ENCODE measurements at regions of chr1 and their contacts with region 1.

Region 1: DNA sequence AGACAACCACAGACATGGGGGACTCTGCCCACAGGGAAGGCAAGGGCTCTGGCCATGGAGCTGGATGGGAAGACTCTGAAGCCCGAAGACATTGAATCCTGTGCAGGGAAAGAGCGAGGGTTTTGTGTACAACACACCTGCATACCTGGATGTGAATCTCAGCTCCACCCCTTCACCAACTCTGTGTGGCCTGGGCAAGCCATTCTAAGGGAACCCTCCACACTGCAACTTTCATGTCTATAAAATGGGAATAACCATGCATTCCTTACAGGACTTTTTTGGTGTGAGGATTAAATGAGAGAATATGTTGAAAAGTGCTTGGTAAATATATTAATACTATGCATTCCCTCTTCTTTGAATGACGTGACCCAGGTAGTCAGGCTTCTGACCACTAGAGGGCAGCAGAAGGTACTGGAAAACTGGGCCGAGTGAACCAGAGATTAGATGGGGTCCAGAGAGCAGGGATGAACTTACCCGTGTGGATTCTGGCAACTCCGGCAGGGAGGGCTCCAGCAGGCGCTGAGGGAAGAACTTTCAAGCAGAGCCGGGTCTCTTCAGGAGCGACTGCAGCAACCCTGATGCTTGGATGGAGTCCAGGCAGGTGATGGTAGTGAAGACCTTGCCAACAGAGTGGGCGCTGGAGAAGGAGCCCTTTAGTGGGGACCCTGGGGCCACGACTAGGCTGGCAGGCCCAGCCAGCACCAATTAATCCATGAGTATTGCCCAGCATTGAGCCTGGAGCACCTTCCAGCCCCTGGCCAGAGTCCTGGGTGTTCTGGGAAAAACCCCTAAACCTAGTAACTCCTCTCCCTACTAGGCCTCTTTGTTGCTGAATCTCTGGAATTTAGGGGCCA is 834 bp upstream of the ELF3 start:
- DNase-seq: peak; percentile 77
- ATAC-seq: peak; percentile 48
- H3K4me3 ChIP-seq: peak overlapping the region; percentile 90 to 93
- H3K27ac ChIP-seq: peak overlapping the region; percentile 74
- H3K4me1 ChIP-seq: peaks cover 61 to 97% of the 10 kb centered on the region in 2 experiments
- H3K27me3 ChIP-seq: no peaks in the 10 kb centered on the region
- CTCF ChIP-seq: peak in 2 of 3 experiments; percentile 89 to 96; a peak in 4 of 6 replicates
- POLR2A ChIP-seq: no peak
- RAD21 ChIP-seq: no peak

Region 2: DNA sequence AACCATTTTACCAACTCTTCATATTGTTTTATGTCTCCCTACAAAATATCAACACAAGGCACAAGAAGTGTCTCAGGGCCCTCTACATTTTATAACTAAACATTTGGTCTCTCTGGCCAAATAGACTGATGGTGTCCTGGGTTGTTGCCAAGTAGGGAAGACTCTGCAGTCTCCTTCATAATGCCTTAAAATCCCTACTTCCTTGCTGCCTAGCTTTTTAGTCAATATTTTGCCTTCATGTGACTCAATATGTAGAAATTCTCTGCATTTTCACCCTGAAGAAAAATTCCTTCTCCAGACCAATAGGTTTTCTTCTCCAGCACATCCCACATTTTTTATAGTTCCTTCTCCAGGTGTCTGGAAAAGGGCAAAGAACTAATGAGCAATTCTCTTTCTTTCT is 253.1 kb before region 1 on chr1:
- CTCF ChIA-PET with region 1: no interaction called
- POLR2A ChIA-PET with region 1: no interaction called
- RAD21 ChIA-PET with region 1: no interaction called
- intact Hi-C with region 1: no loop called
- DNase-seq: no peak
- ATAC-seq: no peak
- H3K4me3 ChIP-seq: no peak overlapping the region
- H3K27ac ChIP-seq: no peak overlapping the region
- H3K4me1 ChIP-seq: peaks cover 0 to 12% of the 10 kb centered on the region in 2 experiments; a peak in 2 of 4 replicates
- H3K27me3 ChIP-seq: no peaks in the 10 kb centered on the region
- CTCF ChIP-seq: no peak
- POLR2A ChIP-seq: no peak
- RAD21 ChIP-seq: no peak

Region 3: GRCh38 chr1:202029171-202029665 is 19.7 kb after region 1 on chr1:
- CTCF ChIA-PET with region 1: interaction called, 8 read pairs
- POLR2A ChIA-PET with region 1: interaction called, 174 read pairs
- RAD21 ChIA-PET with region 1: interaction called, 3 to 8 read pairs
- intact Hi-C with region 1: no loop called
- DNase-seq: peak; percentile 73
- ATAC-seq: peak; percentile 77
- H3K4me3 ChIP-seq: peak overlapping the region in 1 of 2 experiments; percentile 8; a peak in 1 of 4 replicates
- H3K27ac ChIP-seq: peak overlapping the region; percentile 72
- H3K4me1 ChIP-seq: peaks cover 48 to 73% of the 10 kb centered on the region in 2 experiments
- H3K27me3 ChIP-seq: no peaks in the 10 kb centered on the region
- CTCF ChIP-seq: no peak
- POLR2A ChIP-seq: no peak
- RAD21 ChIP-seq: peak; percentile 32; the same call in 1 of the 2 replicates

Region 4: DNA sequence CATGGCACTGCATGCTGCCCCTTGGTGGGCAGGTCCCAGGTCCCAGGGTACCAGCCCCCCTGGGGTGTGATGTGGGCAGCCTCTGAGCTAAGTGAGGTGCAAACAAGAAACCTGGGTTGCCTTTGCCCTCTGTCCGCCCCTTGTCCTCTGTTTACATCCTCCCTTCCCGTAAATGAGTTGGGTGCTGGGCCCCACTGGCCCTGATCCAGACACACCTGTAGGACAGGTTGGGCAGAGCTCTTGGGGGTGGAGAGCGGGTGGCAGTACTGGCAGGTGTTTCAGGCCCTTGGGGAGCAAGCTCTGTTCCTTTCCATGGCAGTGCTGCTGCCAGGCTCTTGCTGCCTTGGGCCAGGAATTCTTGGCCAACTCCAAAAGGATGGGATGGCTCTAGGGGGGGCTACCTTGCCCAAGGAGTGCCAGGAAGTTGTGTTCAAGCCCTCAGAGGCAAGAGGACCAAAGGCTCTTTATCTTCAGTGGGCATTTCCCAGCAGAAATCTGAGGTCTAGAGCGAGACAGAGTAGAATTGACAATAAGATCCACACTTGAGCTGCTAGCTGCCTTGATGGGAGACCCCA is 36.8 kb after region 1 on chr1:
- CTCF ChIA-PET with region 1: interaction called, 4 read pairs
- POLR2A ChIA-PET with region 1: interaction called, 45 read pairs
- RAD21 ChIA-PET with region 1: no interaction called
- intact Hi-C with region 1: no loop called
- DNase-seq: no peak
- ATAC-seq: peak; percentile 39
- H3K4me3 ChIP-seq: peak overlapping the region in 1 of 2 experiments; percentile 15; a peak in 1 of 4 replicates
- H3K27ac ChIP-seq: peak overlapping the region; percentile 63
- H3K4me1 ChIP-seq: peaks cover 47 to 79% of the 10 kb centered on the region in 2 experiments
- H3K27me3 ChIP-seq: no peaks in the 10 kb centered on the region
- CTCF ChIP-seq: no peak
- POLR2A ChIP-seq: no peak
- RAD21 ChIP-seq: peak; percentile 11; the same call in 1 of the 2 replicates

Region 5: DNA sequence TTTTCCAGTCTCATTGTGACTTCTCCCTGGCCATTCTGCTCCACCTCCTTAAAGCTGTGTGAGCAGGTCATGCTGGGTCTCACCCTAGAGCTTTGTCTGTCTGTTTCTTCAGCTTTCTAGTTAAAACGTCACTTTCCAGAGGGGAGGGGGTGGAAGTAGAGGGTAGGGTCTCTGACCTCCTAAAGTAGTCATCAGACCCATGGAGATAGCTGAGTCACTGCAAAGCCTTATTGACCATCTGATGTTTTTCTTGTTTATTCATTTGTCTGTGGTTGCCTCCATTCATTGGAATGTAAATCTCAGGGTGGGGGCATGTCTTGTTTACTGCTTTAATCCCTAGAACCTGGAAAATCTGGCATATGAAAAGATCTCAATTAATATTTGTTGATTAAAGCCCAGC is 53.5 kb after region 1 on chr1:
- CTCF ChIA-PET with region 1: interaction called, 4 read pairs
- POLR2A ChIA-PET with region 1: interaction called, 53 read pairs
- RAD21 ChIA-PET with region 1: no interaction called
- intact Hi-C with region 1: no loop called
- DNase-seq: no peak
- ATAC-seq: no peak
- H3K4me3 ChIP-seq: no peak overlapping the region
- H3K27ac ChIP-seq: peak overlapping the region; percentile 8; the same call in 1 of the 2 replicates
- H3K4me1 ChIP-seq: peaks cover 43 to 66% of the 10 kb centered on the region in 2 experiments
- H3K27me3 ChIP-seq: no peaks in the 10 kb centered on the region
- CTCF ChIP-seq: no peak
- POLR2A ChIP-seq: no peak
- RAD21 ChIP-seq: no peak

Region 6: DNA sequence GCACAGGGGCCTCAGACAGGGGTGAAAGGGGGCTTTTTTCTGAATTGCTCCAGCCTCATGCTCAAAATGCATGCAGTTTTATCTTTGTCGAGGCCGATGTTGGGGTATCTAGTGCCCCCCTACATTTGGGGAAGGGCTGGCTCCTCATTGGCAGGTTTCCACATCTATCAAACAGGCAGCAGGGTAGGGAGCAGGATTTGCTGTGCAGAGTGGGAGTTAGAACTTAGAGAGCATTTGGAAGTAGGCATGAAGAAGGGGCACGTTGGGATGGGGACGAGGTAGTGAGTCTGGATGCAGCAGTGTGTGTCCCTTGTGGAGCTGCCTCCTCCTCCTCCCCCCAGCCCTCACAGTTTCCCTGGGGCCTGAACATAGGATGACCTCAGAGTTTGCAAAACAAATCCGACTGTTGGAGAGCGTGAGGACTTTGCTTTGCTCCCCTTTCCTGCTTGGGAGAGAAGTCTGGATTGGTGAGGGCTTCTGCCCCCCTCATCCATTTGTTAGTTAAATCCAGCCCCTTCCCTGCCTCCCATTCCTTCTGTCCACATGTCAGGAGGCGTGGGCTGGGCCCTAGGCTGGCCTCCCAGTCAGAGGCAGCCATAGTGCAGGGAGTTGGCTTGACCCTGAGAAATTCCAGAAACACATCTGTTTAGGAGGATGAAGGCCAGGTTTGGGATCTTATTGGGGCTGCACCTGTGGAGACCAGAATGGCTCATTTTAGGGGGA is 76.3 kb after region 1 on chr1:
- CTCF ChIA-PET with region 1: no interaction called
- POLR2A ChIA-PET with region 1: interaction called, 55 read pairs
- RAD21 ChIA-PET with region 1: interaction called in 1 of 2 experiments, 5 read pairs
- intact Hi-C with region 1: loop called (anchors 1 kb)
- DNase-seq: no peak
- ATAC-seq: peak; percentile 29
- H3K4me3 ChIP-seq: 0 out of 4 replicates have a peak overlapping the region, but pooled peaks of 1 of the 2 experiments have one; percentile 2
- H3K27ac ChIP-seq: peak overlapping the region; percentile 80
- H3K4me1 ChIP-seq: peaks cover 45 to 66% of the 10 kb centered on the region in 2 experiments
- H3K27me3 ChIP-seq: no peaks in the 10 kb centered on the region
- CTCF ChIP-seq: no peak
- POLR2A ChIP-seq: no peak
- RAD21 ChIP-seq: no peak

Region 7: GRCh38 chr1:202105539-202106276 is 96.2 kb after region 1 on chr1:
- CTCF ChIA-PET with region 1: interaction called, 26 read pairs
- POLR2A ChIA-PET with region 1: interaction called, 72 read pairs
- RAD21 ChIA-PET with region 1: interaction called, 5 to 7 read pairs
- intact Hi-C with region 1: no loop called
- DNase-seq: peak; percentile 88
- ATAC-seq: peak; percentile 83
- H3K4me3 ChIP-seq: peak overlapping the region; percentile 22 to 40
- H3K27ac ChIP-seq: peak overlapping the region; percentile 86
- H3K4me1 ChIP-seq: peaks cover 58 to 71% of the 10 kb centered on the region in 2 experiments
- H3K27me3 ChIP-seq: no peaks in the 10 kb centered on the region
- CTCF ChIP-seq: no peak
- POLR2A ChIP-seq: no peak
- RAD21 ChIP-seq: no peak

Region 8: DNA sequence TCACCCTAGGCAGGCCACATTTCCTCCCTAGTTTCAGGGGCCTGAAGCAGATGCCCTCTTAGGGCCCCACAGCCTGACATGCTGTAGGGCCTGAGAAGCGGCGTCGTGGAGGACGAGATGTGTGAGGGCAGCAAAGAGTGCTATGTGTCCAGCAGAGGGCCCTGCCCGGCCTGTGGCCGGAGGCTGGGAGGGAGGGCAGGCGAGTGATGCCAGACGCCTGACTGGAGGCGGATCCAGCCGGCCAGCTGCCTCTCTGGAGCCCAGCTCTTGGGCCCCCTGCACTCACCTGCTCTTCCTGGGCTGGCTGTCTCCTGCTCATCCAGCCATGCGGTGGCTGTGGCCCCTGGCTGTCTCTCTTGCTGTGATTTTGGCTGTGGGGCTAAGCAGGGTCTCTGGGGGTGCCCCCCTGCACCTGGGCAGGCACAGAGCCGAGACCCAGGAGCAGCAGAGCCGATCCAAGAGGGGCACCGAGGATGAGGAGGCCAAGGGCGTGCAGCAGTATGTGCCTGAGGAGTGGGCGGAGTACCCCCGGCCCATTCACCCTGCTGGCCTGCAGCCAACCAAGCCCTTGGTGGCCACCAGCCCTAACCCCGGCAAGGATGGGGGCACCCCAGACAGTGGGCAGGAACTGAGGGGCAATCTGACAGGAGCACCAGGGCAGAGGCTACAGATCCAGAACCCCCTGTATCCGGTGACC is 113.2 kb after region 1 on chr1 and contains the start of gene GPR37L1:
- CTCF ChIA-PET with region 1: interaction called, 106 read pairs
- POLR2A ChIA-PET with region 1: interaction called, 45 read pairs
- RAD21 ChIA-PET with region 1: interaction called, 8 to 9 read pairs
- intact Hi-C with region 1: loop called (anchors 1 kb)
- DNase-seq: no peak
- ATAC-seq: peak; percentile 70
- H3K4me3 ChIP-seq: no peak within 1 kb of the TSS
- H3K27ac ChIP-seq: no peak within 1 kb of the TSS
- H3K4me1 ChIP-seq: peaks cover 10 to 20% of the 10 kb centered on the region in 2 experiments
- H3K27me3 ChIP-seq: no peaks in the 10 kb centered on the region; the same call in 1 of the 2 replicates
- CTCF ChIP-seq: peak; percentile 52 to 67 (median 66); a peak in 5 of 6 replicates
- POLR2A ChIP-seq: no peak
- RAD21 ChIP-seq: no peak; the same call in 1 of the 2 replicates
- total RNA-seq, gene GPR37L1: 0.10 TPM

Measured in HCT116 (cell line).